ENCODE measurements at regions of chr22 and their contacts with region 1.

Region 1: GRCh38 chr22:35596821-35597220 is 20.3 kb downstream of the MB start:
- DNase-seq: no peak
- ATAC-seq: no peak
- H3K4me3 ChIP-seq: no peak overlapping the region
- H3K4me3 Mint-ChIP-seq: no peak overlapping the region
- H3K27ac ChIP-seq: no peak overlapping the region
- H3K27ac Mint-ChIP-seq: no peak overlapping the region
- H3K4me1 ChIP-seq: no peaks in the 10 kb centered on the region
- H3K4me1 Mint-ChIP-seq: no peaks in the 10 kb centered on the region
- H3K27me3 ChIP-seq: no peaks in the 10 kb centered on the region
- H3K27me3 Mint-ChIP-seq: no peaks in the 10 kb centered on the region
- CTCF ChIP-seq: no peak

Region 2: DNA sequence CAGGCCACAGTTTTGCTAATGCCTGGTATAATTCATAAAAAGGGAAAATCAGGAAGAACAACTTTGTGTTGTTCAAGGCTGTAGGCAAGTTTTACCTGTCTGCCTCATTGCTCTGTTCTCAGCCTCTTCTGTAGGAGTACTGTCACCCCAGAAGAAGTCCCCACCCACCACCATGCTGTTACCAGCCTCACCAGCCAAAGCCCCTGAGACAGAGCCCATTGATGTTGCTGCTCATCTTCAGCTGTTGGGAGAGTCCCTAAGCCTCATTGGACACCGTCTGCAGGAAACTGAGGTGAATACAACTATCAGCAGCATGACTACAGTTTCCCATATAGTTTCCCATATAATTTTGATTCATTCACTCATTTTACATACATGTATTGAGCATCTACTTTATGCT is 308.7 kb before region 1 on chr22:
- CTCF ChIA-PET with region 1: no interaction called
- POLR2A ChIA-PET with region 1: no interaction called
- intact Hi-C with region 1: loop called in 1 of 2 experiments (anchors 2 kb)
- DNase-seq: no peak
- ATAC-seq: no peak
- H3K4me3 ChIP-seq: no peak overlapping the region
- H3K4me3 Mint-ChIP-seq: no peak overlapping the region
- H3K27ac ChIP-seq: no peak overlapping the region
- H3K27ac Mint-ChIP-seq: no peak overlapping the region
- H3K4me1 ChIP-seq: no peaks in the 10 kb centered on the region
- H3K4me1 Mint-ChIP-seq: no peaks in the 10 kb centered on the region
- H3K27me3 ChIP-seq: no peaks in the 10 kb centered on the region
- H3K27me3 Mint-ChIP-seq: no peaks in the 10 kb centered on the region
- CTCF ChIP-seq: no peak

Measured in CD4-positive, alpha-beta T cell (primary cell).